ENCODE measurements at regions of chr12 and their contacts with region 1.

Region 1: GRCh38 chr12:110689281-110690126 is 589 bp upstream of the HVCN1 start:
- DNase-seq: peak; percentile 22 to 73 (median 44)
- ATAC-seq: peak; percentile 78 to 81
- H3K4me3 Mint-ChIP-seq: peak overlapping the region; percentile 85 to 98 (median 92)
- H3K27ac Mint-ChIP-seq: peak overlapping the region; percentile 73 to 95 (median 91)
- H3K4me1 Mint-ChIP-seq: peaks cover 19 to 74% (median 40%) of the 10 kb centered on the region in 4 donors
- H3K27me3 Mint-ChIP-seq: no peaks in the 10 kb centered on the region

Region 2: DNA sequence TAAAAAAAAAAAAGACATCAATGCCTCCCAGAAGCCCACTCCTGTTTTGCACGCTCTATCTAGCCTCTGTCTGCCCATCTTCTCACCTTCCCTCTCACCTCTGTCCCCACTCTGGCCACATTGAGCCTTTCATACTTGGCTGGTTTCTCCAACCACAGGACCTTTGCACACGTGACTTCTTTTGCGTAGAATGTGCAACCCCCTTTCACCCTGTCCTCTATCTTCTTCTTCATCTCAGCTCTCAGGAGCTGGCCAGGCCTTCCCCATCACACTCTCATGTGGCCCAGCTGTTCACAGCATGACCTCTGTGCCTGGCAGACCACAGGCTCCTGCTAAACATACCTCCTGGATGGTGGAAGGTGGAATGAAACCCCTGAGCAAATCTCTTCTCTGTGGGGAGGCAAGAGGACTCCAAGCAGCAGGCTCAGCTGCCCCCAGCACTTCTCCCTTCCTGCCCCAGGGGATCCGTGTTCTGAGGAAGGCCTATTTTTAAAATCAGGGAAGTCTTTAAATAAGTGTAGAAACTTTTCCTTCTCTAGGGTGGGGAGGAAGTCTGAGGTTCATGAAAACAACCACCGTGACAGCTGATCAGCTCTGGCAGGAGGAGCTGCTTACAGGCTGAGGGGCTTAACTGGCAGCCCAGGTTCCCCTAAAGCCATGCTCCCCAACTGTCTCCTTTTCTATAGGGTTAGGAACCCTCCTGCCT is 12.1 kb before region 1 on chr12:
- POLR2A ChIA-PET with region 1: interaction called, 24 read pairs
- DNase-seq: peak in 3 of 10 donors; percentile 29 to 37 (median 30)
- ATAC-seq: peak; percentile 81 to 84
- H3K4me3 Mint-ChIP-seq: peak overlapping the region; percentile 24 to 95 (median 75)
- H3K27ac Mint-ChIP-seq: peak overlapping the region; percentile 79 to 96 (median 88)
- H3K4me1 Mint-ChIP-seq: peaks cover 31 to 79% (median 45%) of the 10 kb centered on the region in 4 donors
- H3K27me3 Mint-ChIP-seq: no peaks in the 10 kb centered on the region

Region 3: DNA sequence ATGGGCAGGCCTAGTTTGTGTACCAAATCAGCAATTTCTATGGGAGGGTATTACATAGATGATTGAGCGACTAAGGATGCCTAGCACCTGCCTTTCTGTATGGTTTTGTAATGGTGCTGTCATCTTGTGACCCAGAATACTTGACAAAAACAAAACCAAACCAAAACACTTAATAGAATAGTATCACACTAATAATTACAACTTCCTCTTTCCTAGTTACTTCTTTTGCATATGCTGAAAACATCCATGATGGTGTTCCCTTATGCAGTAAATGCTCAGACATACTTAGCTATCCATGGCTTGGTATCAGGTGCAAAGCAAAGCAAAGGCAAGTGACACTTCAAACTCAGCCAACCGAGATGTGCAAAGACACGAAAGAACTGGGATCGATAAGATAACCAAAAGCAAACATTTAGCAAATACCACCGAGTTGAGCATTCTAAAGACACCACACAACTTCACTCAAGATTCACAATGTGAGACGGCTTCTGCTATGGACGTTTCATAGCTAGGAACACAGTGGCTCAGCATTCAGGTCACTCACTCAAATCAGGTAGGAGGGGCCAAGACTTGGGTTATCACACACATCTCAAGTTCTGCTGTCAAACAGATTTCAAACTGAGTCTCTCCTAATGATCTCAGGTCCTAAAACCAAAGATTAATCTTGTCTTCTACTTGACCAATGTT is 28.9 kb after region 1 on chr12:
- POLR2A ChIA-PET with region 1: no interaction called
- DNase-seq: no peak
- ATAC-seq: no peak
- H3K4me3 Mint-ChIP-seq: no peak overlapping the region
- H3K27ac Mint-ChIP-seq: peak overlapping the region in 8 of 10 donors; percentile 20 to 75 (median 29)
- H3K4me1 Mint-ChIP-seq: peaks cover 0 to 14% (median 3%) of the 10 kb centered on the region in 4 donors
- H3K27me3 Mint-ChIP-seq: no peaks in the 10 kb centered on the region

Measured in naive thymus-derived CD8-positive, alpha-beta T cell (primary cell).